ENCODE measurements at regions of chr19 and their contacts with region 1.

Region 1: GRCh38 chr19:31349160-31349881 is at the start of gene TSHZ3:
- DNase-seq: peak; percentile 67
- H3K4me3 Mint-ChIP-seq: peak within 1 kb of the TSS; percentile 76
- H3K27ac Mint-ChIP-seq: no peak within 1 kb of the TSS
- H3K4me1 Mint-ChIP-seq: peaks cover 28% of the 10 kb centered on the region
- H3K27me3 Mint-ChIP-seq: peaks cover 47% of the 10 kb centered on the region
- total RNA-seq, gene TSHZ3: 1.6 to 2.0 TPM

Region 2: GRCh38 chr19:31214086-31214485 is 135.2 kb before region 1 on chr19:
- CTCF ChIA-PET with region 1: interaction called, 7 read pairs
- intact Hi-C with region 1: loop called (anchors 2 kb)
- DNase-seq: peak; percentile 97
- H3K4me3 Mint-ChIP-seq: peak overlapping the region; percentile 60
- H3K27ac Mint-ChIP-seq: peak overlapping the region; percentile 99
- H3K4me1 Mint-ChIP-seq: peaks cover 40% of the 10 kb centered on the region
- H3K27me3 Mint-ChIP-seq: no peaks in the 10 kb centered on the region

Region 3: DNA sequence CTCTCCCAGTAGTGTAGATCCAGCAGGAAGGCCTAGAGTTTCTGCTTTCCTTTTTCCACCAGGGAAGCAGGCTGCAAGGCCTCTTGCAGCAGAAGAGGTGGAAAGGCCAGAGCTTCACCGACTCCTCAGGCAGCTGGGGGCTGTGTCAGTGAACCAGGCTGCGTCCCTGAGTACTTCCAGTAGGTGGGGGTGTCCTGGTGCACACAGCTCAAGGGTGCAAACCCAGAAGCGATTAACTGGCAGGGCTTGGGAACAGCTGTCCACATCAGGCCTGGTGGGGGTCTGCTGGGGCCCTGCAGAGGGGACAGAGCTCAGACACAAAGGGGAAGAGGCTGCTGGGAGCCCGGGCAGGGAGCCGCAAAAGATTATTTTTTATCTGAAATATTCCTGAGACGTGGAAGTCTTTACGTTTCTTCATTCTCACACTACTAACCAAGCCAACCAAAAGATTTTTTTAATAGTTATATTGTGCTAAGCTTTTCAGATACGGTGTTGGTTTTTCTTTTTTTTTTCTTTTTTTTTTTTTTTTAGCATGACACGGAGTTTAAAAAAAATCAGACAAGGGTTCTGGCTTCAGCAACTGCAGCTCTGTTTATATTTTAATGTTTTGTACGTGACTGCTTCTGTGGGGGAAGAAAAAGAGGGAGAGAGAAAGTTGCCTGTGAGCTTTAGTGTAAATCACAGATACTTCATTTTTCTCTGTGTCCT is 11.1 kb before region 1 on chr19:
- CTCF ChIA-PET with region 1: no interaction called
- intact Hi-C with region 1: loop called (anchors 1 kb)
- DNase-seq: peak; percentile 59
- H3K4me3 Mint-ChIP-seq: no peak overlapping the region
- H3K27ac Mint-ChIP-seq: no peak overlapping the region
- H3K4me1 Mint-ChIP-seq: peaks cover 29% of the 10 kb centered on the region
- H3K27me3 Mint-ChIP-seq: peaks cover 2% of the 10 kb centered on the region

Region 4: DNA sequence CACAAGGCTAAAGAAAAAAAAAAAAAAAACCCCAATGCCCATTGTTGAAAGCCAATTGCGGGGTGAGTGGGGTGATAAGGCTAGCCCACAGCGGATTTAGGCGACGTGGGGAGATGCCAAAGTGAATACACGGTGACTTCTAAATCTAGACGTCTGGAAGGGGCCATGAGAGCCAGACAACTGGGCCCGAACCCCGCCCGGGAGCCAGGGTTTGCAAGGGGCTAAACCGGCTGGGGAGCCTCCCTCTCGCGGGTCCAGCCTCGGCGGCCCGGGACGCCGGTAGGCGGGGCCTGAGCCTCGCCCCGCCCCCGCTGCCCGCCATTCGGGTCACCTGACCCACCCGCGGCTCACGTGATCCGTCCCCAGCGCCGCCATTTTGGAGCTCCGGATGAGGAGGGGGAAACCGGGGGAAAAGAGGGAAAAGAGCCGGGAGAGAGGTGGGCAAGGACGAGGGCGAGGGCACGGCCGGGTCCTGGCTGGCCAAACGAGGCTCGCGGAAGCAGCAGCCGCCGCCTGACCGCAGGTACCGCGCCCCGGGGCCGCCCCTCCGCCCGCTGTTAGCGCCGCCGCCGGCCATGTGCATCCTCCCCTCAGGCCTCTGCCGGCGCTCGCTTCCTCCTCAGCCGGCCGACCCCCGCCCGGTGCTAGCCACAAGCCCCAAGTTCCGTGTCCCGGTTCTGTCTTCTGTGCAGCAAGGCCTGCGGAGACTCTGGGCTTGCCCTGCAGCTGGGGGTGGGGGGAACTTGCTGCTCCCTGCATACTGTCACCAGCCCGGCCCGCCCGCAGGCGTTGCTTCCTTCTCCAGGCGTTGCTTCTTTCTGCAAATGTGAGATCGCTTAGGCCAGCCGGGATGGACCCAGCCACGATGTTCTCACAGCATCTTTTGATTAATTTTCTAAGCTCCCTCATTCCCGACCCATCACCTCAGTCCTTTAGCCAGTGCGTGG is 996.2 kb after region 1 on chr19 and contains the start of gene ZNF507:
- CTCF ChIA-PET with region 1: no interaction called
- intact Hi-C with region 1: loop called (anchors 10 kb)
- DNase-seq: peak; percentile 90
- H3K4me3 Mint-ChIP-seq: peak within 1 kb of the TSS; percentile 96
- H3K27ac Mint-ChIP-seq: peak within 1 kb of the TSS; percentile 89
- H3K4me1 Mint-ChIP-seq: peaks cover 34% of the 10 kb centered on the region
- H3K27me3 Mint-ChIP-seq: no peaks in the 10 kb centered on the region
- total RNA-seq, gene ZNF507: 21.4 to 21.5 TPM

Region 5: GRCh38 chr19:33080761-33081681 is 1731.7 kb after region 1 on chr19 and contains the start of gene GPATCH1:
- CTCF ChIA-PET with region 1: no interaction called
- intact Hi-C with region 1: loop called (anchors 10 kb)
- DNase-seq: peak; percentile 89
- H3K4me3 Mint-ChIP-seq: peak within 1 kb of the TSS; percentile 99
- H3K27ac Mint-ChIP-seq: peak within 1 kb of the TSS; percentile 88
- H3K4me1 Mint-ChIP-seq: peaks cover 25% of the 10 kb centered on the region
- H3K27me3 Mint-ChIP-seq: no peaks in the 10 kb centered on the region
- total RNA-seq, gene GPATCH1: 8.3 to 9.1 TPM

Measured in activated naive CD4-positive, alpha-beta T cell treated with anti-CD3 and anti-CD28 coated beads for 36 hours (primary cell).